Activated CD4-positive, alpha-beta memory T cell treated with anti-CD3 and anti-CD28 coated beads for 36 hours (primary cell): ENCODE measurements at regions of chr9 and their contacts with region 1.

Region 1: GRCh38 chr9:2241836-2242741 is 226.9 kb downstream of the SMARCA2 start:
- DNase-seq: peak; percentile 77
- H3K4me3 Mint-ChIP-seq: peak overlapping the region; percentile 72
- H3K27ac Mint-ChIP-seq: no peak overlapping the region
- H3K4me1 Mint-ChIP-seq: peaks cover 14% of the 10 kb centered on the region
- H3K27me3 Mint-ChIP-seq: peaks cover 9% of the 10 kb centered on the region

Region 2: DNA sequence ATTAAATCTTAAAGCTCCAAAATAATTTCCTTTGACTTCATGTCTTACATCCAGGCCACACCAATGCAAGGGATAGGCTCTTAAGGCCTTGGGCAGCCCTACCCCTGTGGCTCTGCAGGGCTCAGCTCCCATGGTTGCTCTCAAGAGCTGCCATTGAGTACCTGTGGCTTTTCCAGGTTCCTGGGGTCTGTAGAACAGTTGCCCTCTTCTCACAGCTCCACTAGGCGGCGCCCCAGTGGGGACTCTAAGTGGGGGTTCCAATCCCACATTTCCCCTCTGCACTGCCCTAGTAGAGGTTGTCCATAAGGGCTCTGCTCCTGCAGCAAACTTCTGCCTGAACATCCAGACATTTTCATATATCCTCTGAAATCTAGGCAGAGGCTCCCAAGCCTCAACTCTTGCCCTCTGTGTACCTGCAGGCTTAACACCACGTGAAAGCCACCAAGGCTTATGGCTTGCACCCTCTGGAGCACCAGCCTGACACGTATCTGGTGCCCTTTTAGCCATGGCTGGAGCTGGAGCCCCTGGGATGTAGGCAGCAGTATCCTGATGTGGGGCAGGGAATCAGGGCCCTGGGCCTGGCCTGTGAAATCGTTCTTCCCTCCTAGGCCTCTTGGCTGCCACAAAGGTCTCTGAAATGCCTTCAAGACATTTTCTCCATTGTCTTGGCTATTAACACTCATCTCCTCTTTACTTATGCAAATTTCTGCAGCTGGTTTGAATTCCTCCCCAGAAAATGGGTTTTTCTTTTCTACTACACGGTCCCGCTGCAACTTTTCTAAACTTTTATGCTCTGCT is 41.9 kb before region 1 on chr9:
- CTCF ChIA-PET with region 1: no interaction called
- POLR2A ChIA-PET with region 1: no interaction called
- intact Hi-C with region 1: no loop called
- DNase-seq: no peak
- H3K4me3 Mint-ChIP-seq: no peak overlapping the region
- H3K27ac Mint-ChIP-seq: no peak overlapping the region
- H3K4me1 Mint-ChIP-seq: peaks cover 12% of the 10 kb centered on the region
- H3K27me3 Mint-ChIP-seq: no peaks in the 10 kb centered on the region

Region 3: GRCh38 chr9:2271426-2271825 is 29.3 kb after region 1 on chr9:
- CTCF ChIA-PET with region 1: no interaction called
- POLR2A ChIA-PET with region 1: no interaction called
- intact Hi-C with region 1: no loop called
- DNase-seq: peak; percentile 43
- H3K4me3 Mint-ChIP-seq: no peak overlapping the region
- H3K27ac Mint-ChIP-seq: no peak overlapping the region
- H3K4me1 Mint-ChIP-seq: no peaks in the 10 kb centered on the region
- H3K27me3 Mint-ChIP-seq: peaks cover 7% of the 10 kb centered on the region

Region 4: GRCh38 chr9:2771662-2772061 is 529.6 kb after region 1 on chr9:
- CTCF ChIA-PET with region 1: no interaction called
- POLR2A ChIA-PET with region 1: no interaction called
- intact Hi-C with region 1: no loop called
- DNase-seq: no peak
- H3K4me3 Mint-ChIP-seq: no peak overlapping the region
- H3K27ac Mint-ChIP-seq: no peak overlapping the region
- H3K4me1 Mint-ChIP-seq: no peaks in the 10 kb centered on the region
- H3K27me3 Mint-ChIP-seq: no peaks in the 10 kb centered on the region

Region 5: DNA sequence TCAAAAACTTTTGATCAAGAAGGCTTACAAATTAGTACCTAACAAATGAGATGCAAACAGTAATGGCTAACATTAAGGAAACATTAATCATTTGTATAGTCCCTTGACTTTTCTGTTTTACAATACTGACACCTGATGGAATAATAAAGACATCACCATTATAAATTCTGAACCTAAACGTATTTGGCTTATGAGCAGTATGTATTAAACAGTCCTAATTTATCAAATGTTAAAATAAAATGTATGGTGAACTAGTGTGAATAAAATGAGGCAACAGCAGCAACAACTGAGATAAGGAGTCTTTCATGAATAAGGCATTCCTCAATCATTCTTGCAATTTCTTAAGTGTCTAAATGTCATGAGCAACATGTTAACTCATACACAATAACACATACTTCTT is 595.8 kb after region 1 on chr9:
- CTCF ChIA-PET with region 1: no interaction called
- POLR2A ChIA-PET with region 1: no interaction called
- intact Hi-C with region 1: loop called (anchors 5 kb)
- DNase-seq: no peak
- H3K4me3 Mint-ChIP-seq: no peak overlapping the region
- H3K27ac Mint-ChIP-seq: no peak overlapping the region
- H3K4me1 Mint-ChIP-seq: peaks cover 34% of the 10 kb centered on the region
- H3K27me3 Mint-ChIP-seq: no peaks in the 10 kb centered on the region